Adrenal gland (tissue), 19 donors: ENCODE measurements at regions of chr3 and their contacts with region 1.

Region 1: GRCh38 chr3:189947948-189948723 is 172.6 kb downstream of the P3H2 start:
- DNase-seq: no peak
- H3K4me3 ChIP-seq: no peak overlapping the region
- H3K27ac ChIP-seq: no peak overlapping the region
- H3K4me1 ChIP-seq: no peaks in the 10 kb centered on the region
- H3K27me3 ChIP-seq: no peaks in the 10 kb centered on the region
- CTCF ChIP-seq: peak; percentile 31 to 52 (median 46)
- POLR2A ChIP-seq: no peak

Region 2: DNA sequence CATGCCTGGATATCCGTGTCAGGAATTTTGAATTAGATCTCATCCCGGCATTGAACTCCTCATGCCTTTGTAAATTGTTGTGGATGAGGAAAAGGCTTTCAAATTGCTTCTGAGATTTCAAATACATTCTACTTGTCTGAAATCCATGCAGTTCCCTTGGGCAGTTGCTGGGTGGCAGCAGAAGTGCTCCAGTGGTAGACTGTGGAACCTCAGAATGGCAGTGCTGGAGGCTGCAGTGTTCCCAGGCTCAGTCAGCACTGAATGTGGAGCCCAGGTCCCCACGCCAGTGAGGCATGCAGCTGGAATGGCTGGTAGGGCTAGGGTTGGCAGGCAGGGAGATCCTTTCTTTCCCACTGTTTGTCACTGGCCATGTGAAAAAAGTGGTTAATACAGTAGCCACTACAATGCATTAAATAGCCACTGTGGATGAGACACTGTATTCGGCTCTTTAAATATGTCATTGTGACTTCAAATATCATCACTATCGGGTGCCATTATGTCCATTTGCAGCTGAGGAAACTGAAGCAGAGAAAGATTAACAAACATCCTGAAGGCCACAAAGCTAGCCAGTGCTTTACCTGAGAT is 677.8 kb before region 1 on chr3:
- intact Hi-C with region 1: loop called in 1 of 2 experiments (anchors 10 kb)
- DNase-seq: peak; percentile 34 to 81 (median 60)
- H3K4me3 ChIP-seq: no peak overlapping the region
- H3K27ac ChIP-seq: no peak overlapping the region
- H3K4me1 ChIP-seq: no peaks in the 10 kb centered on the region
- H3K27me3 ChIP-seq: no peaks in the 10 kb centered on the region
- CTCF ChIP-seq: peak; percentile 23 to 63 (median 55)
- POLR2A ChIP-seq: no peak

Region 3: DNA sequence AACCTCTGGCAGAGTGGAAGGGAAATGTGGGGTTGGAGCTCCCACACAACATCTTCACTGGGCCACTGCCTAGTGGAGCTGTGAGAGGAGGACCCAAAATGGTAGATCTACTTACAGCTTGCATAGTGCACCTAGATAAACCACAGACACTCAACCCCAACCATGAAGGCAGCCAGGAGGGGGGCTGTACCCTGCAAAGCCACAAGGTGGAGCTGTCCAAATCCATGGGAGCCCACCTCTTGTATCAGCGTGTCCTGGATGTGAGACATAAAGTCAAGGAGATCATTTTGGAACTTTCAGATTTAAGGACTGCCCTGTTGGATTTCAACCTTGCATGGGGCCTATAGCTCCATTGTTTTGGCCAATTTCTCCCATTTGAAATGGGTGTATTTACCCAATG is 296.1 kb before region 1 on chr3:
- intact Hi-C with region 1: no loop called
- DNase-seq: peak in 2 of 7 donors; percentile 2 to 22
- H3K4me3 ChIP-seq: no peak overlapping the region
- H3K27ac ChIP-seq: no peak overlapping the region
- H3K4me1 ChIP-seq: no peaks in the 10 kb centered on the region
- H3K27me3 ChIP-seq: no peaks in the 10 kb centered on the region
- CTCF ChIP-seq: peak in 1 of 6 experiments; percentile 20
- POLR2A ChIP-seq: no peak